ENCODE measurements at regions of chr1 and their contacts with region 1.

Region 1: DNA sequence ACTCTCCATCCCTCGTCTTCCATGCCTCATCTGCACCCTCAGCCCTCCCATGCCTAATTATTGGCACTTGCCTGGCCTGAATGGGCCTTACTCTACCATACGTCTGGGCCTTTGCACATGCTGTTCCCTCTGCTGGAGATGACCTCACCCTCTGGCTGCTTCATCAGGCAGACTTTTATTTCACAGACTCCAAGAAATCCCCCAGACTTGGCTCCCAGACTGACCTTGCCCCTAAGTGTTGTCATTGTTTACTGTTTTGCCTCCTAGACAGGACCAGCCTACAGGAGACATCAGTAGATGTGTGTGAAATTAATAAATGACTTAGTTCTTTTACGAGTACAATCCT is 5.2 kb upstream of the AHDC1 start:
- DNase-seq: peak in 2 of 9 experiments; percentile 49 to 64
- ATAC-seq: peak; percentile 9
- H3K4me3 ChIP-seq: no peak overlapping the region
- H3K4me3 Mint-ChIP-seq: no peak overlapping the region
- H3K27ac ChIP-seq: peak overlapping the region in 1 of 2 experiments; percentile 11
- H3K27ac Mint-ChIP-seq: no peak overlapping the region
- H3K4me1 ChIP-seq: peaks cover 61% of the 10 kb centered on the region
- H3K4me1 Mint-ChIP-seq: peaks cover 34% of the 10 kb centered on the region
- H3K27me3 ChIP-seq: no peaks in the 10 kb centered on the region
- H3K27me3 Mint-ChIP-seq: no peaks in the 10 kb centered on the region
- CTCF ChIP-seq: no peak

Region 2: DNA sequence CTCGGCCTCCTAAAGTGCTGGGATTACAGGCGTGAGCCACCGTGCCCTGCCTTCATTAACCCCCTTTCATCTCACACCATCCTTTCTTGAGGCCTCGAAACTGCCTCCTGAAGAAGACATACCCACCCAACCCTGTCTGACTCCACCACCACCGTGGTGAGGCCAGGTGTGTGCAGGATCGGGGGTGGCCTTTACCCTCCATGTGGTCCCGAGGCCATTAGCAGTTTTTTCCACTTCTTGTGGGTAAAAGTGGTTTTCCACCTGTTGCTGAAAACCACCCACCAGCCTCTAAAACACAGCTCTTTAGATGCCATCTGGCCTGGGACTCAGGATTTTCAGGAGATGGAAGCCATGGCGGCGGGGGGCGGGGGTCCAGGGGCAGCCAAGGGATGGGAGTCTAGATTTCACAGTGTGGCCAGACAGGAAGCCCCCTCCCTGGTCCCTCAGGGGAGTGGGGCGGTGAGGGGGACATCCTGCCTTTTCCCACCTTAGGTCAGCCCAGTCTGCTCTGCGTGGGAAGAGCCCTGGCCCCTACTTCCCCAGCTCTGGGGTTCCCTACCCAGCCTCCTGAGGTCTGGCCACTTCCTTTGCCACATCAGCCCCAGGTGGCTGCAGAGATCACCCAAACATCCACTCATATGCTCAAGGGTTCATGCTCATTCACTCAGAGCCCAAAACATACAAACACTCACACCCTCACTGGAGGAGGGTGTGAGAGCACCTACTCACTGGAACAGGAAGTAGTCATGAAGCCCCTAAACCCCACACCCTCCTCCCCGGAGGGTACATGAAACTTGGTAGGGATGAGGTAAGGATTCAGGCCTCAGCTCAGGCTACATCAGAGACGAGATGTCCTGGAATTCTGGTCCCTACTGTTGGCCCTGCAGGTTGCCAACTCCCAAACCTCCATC is 23.5 kb after region 1 on chr1:
- CTCF ChIA-PET with region 1: interaction called, 11 read pairs
- POLR2A ChIA-PET with region 1: no interaction called
- intact Hi-C with region 1: no loop called
- DNase-seq: peak in 4 of 9 experiments; percentile 29 to 72 (median 42)
- ATAC-seq: peak; percentile 52
- H3K4me3 ChIP-seq: peak overlapping the region in 1 of 2 experiments; percentile 8
- H3K4me3 Mint-ChIP-seq: peak overlapping the region; percentile 75
- H3K27ac ChIP-seq: peak overlapping the region in 1 of 2 experiments; percentile 75
- H3K27ac Mint-ChIP-seq: peak overlapping the region; percentile 82
- H3K4me1 ChIP-seq: peaks cover 72% of the 10 kb centered on the region
- H3K4me1 Mint-ChIP-seq: peaks cover 68% of the 10 kb centered on the region
- H3K27me3 ChIP-seq: no peaks in the 10 kb centered on the region
- H3K27me3 Mint-ChIP-seq: no peaks in the 10 kb centered on the region
- CTCF ChIP-seq: no peak

Region 3: GRCh38 chr1:27643701-27644625 is 34.8 kb after region 1 on chr1:
- CTCF ChIA-PET with region 1: interaction called, 22 read pairs
- POLR2A ChIA-PET with region 1: interaction called, 6 read pairs
- intact Hi-C with region 1: loop called (anchors 1 to 5 kb)
- DNase-seq: peak; percentile 45 to 87 (median 75)
- ATAC-seq: peak; percentile 99
- H3K4me3 ChIP-seq: no peak overlapping the region
- H3K4me3 Mint-ChIP-seq: no peak overlapping the region
- H3K27ac ChIP-seq: peak overlapping the region in 1 of 2 experiments; percentile 27
- H3K27ac Mint-ChIP-seq: peak overlapping the region; percentile 37
- H3K4me1 ChIP-seq: peaks cover 18% of the 10 kb centered on the region
- H3K4me1 Mint-ChIP-seq: peaks cover 19% of the 10 kb centered on the region
- H3K27me3 ChIP-seq: no peaks in the 10 kb centered on the region
- H3K27me3 Mint-ChIP-seq: no peaks in the 10 kb centered on the region
- CTCF ChIP-seq: peak; percentile 86

Measured in CD8-positive, alpha-beta T cell (primary cell).